ENCODE measurements at regions of chr14 and their contacts with region 1.

Region 1: GRCh38 chr14:35121887-35122695 is at the starts of genes PPP2R3C and PRORP:
- DNase-seq: peak; percentile 82
- ATAC-seq: peak; percentile 88
- H3K4me3 Mint-ChIP-seq: peak within 1 kb of the TSS; percentile 99
- H3K27ac Mint-ChIP-seq: peak within 1 kb of the TSS; percentile 100
- H3K4me1 Mint-ChIP-seq: peaks cover 49% of the 10 kb centered on the region
- H3K27me3 Mint-ChIP-seq: no peaks in the 10 kb centered on the region
- CTCF ChIP-seq: no peak
- total RNA-seq, gene PPP2R3C: 46.0 and 48.9 TPM in 2 replicates
- total RNA-seq, gene PRORP: 22.8 and 25.6 TPM in 2 replicates

Region 2: DNA sequence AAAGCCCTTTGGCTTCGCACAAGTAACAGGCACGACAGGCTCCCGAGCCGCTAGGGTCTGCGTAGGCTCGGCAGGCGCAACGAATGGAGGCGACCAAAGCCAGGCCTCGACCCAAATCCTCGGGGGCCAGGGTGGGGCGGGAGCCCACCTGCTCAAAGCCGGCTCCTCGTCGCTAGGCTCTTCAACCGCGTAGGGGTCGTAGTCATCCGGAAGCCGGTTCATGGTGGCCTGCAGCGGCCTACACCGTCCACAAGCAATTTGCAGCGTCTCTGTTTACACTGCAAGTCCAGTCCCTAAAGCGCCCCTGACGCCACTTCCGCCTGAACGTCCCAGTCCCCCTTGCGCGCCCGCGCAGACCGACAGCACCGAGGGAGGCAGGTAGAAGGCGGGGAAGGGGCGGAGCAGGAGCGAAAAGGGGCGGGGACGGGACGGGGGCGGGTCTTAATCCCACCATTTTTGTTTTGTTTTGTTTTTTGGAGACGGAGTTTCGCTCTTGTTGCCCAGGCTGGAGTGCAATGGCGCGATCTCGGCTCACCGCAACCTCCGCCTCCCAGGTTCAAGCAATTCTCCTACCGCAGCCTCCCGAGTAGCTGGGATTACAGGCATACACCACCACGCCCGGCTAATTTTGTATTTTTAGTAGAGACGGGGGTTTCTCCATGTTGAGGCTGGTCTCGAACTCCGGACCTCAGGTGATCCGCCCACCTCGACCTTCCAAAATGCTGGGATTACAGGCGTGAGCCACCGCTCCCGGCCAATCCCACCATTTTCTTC is 582.5 kb before region 1 on chr14 and contains the start of gene EAPP:
- CTCF ChIA-PET with region 1: no interaction called
- POLR2A ChIA-PET with region 1: no interaction called
- intact Hi-C with region 1: loop called (anchors 5 kb)
- DNase-seq: peak; percentile 86
- ATAC-seq: peak; percentile 99
- H3K4me3 Mint-ChIP-seq: peak within 1 kb of the TSS; percentile 99
- H3K27ac Mint-ChIP-seq: peak within 1 kb of the TSS; percentile 97
- H3K4me1 Mint-ChIP-seq: peaks cover 34% of the 10 kb centered on the region
- H3K27me3 Mint-ChIP-seq: no peaks in the 10 kb centered on the region
- CTCF ChIP-seq: no peak
- total RNA-seq, gene EAPP: 40.7 and 43.2 TPM in 2 replicates

Region 3: DNA sequence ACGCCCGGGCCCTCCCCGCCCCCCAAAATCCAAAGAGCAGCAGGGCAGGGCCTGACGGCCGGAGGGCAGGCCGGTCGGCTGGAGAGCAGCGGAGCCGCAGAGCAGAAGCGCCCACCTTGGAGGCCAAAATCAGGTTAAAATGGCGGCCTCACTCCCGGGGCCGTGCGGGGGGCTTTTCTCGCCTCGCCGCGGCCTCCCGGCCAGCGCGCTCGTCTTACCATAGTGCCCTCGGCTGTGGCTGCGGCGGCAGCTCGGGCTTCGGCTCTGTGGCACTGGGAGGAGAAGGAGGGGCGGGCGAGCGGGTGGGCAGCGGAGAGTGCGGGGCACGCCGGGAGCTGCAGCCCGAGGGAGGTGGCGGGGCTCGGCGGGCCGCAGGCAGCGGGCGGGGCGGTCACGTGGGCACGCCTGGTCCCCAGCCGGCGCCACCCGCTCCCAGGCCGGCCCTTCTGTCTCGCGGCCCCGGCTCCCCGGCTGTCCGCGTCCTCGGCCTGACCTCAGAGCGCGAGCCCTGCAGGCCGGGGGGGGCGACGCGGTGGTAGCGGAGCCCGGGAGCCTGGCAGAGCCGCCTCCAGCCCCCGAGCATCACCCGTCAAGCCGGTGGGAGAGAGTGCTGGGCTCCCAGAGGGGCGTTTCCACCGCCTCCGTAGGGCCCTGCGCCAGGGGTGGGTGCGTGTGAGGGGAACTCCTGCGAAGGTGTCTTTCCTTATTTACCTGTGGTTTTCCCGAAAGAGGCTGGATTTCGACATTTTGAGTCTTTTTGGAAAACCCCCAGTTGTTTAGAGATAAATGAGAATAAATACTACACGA is 407.6 kb before region 1 on chr14 and contains the start of gene CFL2:
- CTCF ChIA-PET with region 1: no interaction called
- POLR2A ChIA-PET with region 1: no interaction called
- intact Hi-C with region 1: loop called (anchors 2 kb)
- DNase-seq: peak; percentile 80
- ATAC-seq: peak; percentile 90
- H3K4me3 Mint-ChIP-seq: peak within 1 kb of the TSS; percentile 92
- H3K27ac Mint-ChIP-seq: peak within 1 kb of the TSS; percentile 89
- H3K4me1 Mint-ChIP-seq: peaks cover 32% of the 10 kb centered on the region
- H3K27me3 Mint-ChIP-seq: no peaks in the 10 kb centered on the region
- CTCF ChIP-seq: no peak
- total RNA-seq, gene CFL2: 19.1 and 20.8 TPM in 2 replicates

Region 4: DNA sequence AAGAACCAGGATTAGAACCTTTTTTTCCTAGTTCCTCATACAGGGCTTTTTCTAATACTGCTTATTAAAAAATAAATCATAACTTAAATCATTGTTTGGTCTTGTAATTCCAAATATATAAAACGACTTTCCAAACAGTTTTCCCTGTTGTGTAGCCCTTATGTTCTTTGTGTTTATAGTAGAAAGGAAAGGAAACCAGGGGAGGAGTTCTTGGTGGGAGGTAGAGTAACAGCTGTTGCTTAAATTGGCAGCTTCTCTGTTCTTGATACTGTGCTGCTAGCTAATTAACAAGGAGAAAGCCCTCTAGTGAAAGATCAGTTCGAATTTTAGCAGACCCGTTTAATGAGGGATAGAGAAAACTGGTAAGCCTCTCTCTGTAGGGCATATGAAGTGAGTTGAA is 124.3 kb before region 1 on chr14:
- CTCF ChIA-PET with region 1: no interaction called
- POLR2A ChIA-PET with region 1: interaction called, 11 read pairs
- intact Hi-C with region 1: no loop called
- DNase-seq: no peak
- ATAC-seq: no peak
- H3K4me3 Mint-ChIP-seq: no peak overlapping the region
- H3K27ac Mint-ChIP-seq: no peak overlapping the region
- H3K4me1 Mint-ChIP-seq: peaks cover 8% of the 10 kb centered on the region
- H3K27me3 Mint-ChIP-seq: no peaks in the 10 kb centered on the region
- CTCF ChIP-seq: no peak

Region 5: DNA sequence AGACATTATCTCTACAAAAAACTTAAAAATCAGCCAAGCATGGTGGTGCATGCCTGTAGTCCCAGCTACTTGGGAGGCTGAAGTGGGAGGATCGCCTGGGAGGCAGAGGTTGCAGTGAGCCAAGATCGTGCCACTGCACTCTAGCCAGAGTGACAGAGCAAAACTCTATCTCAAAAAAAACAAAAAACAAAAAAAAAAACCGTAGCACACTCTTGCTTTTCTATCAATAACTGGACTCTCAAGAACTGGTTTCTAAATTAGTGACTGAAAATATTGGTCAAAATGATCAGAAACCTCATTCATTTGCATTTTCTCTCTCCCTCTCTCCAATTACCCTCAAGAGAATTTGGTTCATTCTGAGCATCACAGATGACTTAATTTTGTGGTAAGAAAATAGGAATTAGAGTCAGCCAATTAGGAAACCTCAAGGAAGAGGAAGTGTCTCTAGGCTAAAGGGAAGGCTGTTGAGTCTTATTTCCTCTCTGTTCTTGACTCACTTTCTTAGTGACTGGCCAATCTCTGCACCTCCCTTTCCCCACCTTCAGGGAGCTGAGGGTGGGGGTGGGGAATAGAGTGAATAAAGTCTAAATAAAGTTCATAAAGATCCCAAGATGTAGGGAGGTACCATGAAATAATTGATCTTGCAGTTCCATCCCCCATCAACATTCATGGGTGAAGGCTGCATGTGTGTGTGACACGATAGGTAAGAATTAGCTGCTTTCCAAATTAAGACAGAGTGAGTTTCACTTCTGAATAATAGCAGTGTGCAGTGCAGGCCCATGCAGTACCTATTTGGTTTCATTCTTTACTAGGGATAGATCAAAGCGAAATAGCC is 163.3 kb after region 1 on chr14:
- CTCF ChIA-PET with region 1: no interaction called
- POLR2A ChIA-PET with region 1: interaction called, 7 read pairs
- intact Hi-C with region 1: loop called (anchors 1 kb)
- DNase-seq: no peak
- ATAC-seq: peak; percentile 81
- H3K4me3 Mint-ChIP-seq: peak overlapping the region; percentile 80
- H3K27ac Mint-ChIP-seq: peak overlapping the region; percentile 90
- H3K4me1 Mint-ChIP-seq: peaks cover 52% of the 10 kb centered on the region
- H3K27me3 Mint-ChIP-seq: no peaks in the 10 kb centered on the region
- CTCF ChIP-seq: no peak

Region 6: GRCh38 chr14:35808076-35808652 is 686.1 kb after region 1 on chr14:
- CTCF ChIA-PET with region 1: no interaction called
- POLR2A ChIA-PET with region 1: no interaction called
- intact Hi-C with region 1: loop called (anchors 1 kb)
- DNase-seq: no peak
- ATAC-seq: no peak
- H3K4me3 Mint-ChIP-seq: peak overlapping the region; percentile 95
- H3K27ac Mint-ChIP-seq: peak overlapping the region; percentile 87
- H3K4me1 Mint-ChIP-seq: peaks cover 31% of the 10 kb centered on the region
- H3K27me3 Mint-ChIP-seq: no peaks in the 10 kb centered on the region
- CTCF ChIP-seq: no peak

Measured in activated B cell treated with CpG ODN at 0.5 μM for 24 hours (primary cell).